ENCODE measurements at regions of chr2 and their contacts with region 1.

Region 1: GRCh38 chr2:190853531-190854383 is 26.9 kb upstream of the GLS start:
- DNase-seq: no peak
- ATAC-seq: peak in 1 of 2 donors; percentile 58

Region 2: DNA sequence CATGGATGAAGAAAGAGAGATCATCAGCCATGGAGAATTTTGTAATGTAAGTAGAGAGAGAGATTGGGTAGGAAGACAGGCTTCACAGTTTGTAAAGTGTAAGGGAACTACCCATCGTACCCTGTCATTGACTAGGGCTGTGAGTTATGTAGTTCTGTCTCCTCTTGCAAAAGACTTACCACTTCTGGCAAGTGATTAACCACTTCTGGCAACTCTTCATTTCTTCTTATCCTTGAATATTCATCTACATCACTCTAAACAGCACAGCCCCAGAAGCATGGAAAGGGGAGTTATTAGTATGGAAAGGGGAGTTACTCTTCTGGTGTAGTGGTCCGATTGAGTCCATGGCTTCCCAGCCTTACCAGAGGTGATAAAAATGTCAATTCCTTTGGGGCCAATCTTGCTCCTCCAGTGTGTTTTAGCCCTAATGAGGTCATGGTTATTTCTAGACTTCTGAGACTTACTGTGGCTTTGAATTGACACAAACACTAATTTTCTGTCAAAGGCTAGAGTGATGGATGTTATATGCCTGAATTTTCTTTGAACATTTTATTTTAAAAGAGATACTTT is 108.2 kb after region 1 on chr2:
- intact Hi-C with region 1: loop called in 1 of 2 experiments (anchors 10 kb)
- DNase-seq: no peak
- ATAC-seq: peak; percentile 23 to 87

Region 3: DNA sequence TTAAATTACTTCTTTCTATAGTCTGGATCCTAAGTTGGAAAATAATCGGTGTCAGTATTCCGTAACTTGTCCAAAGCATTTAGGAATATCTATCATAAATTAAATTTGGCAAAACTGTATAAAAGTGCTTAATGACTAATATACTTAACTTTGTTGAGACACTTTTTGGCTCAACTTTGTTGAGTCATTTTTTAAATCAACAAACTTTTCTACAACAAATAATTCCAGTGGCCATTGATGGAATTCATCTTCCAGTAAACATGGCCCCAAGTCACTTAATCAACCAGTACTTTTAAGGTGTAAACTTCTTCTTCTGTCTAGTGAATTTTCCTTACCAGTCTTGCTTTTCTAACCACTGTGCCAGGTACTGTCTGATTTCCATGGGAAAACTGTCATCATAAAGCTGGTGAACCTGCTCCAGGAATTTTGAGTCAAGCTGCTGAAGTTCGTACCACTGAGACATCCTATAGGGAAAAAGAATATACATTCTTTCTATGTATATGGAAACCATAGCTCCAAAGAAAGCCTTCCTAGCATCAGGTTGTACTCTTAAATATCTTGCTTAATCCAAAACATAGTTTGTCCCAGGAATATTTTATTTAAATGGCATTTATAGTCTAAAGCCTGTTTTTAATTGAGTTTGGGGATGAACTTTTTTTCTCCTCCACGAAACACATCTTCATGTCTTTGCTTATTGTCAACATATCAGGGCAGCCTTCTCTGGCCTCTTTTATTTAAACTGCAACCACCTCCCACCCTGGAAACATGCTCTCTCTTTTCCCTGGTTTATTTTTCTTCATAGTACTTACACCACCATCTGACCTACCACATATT is 156.0 kb after region 1 on chr2:
- intact Hi-C with region 1: no loop called
- DNase-seq: no peak
- ATAC-seq: no peak

Region 4: DNA sequence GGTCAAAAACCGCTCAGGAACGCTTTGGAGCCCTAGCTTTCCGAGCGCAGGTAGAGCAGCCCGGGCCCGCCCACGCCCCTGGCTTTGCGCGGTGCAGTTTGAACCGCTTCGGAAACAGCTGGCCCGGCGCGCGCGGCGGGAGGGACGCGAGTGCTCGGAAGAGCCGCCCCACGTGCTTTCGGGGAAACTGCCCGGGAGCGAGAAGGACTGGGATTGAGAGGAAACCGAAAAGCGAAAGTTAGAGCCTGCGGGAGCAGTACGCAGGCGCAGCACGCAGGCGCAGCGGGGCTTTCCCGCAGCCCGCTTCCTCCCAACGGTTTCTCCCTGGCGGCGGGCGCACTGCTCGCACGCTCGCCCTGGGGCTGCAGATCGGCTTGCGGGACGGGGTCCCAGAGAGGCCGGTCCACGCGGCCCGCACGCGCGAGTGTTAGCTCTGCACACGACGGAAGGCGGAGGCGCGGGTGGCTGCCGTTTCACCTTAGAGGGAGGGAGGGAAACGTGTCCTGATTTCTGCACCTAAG is 166.5 kb after region 1 on chr2:
- intact Hi-C with region 1: loop called in 1 of 2 experiments (anchors 5 kb)
- DNase-seq: peak; percentile 92
- ATAC-seq: peak; percentile 99

Measured in left cardiac atrium (tissue), 4 donors.